Sigmoid colon (tissue), 7 donors: ENCODE measurements at regions of chr17 and their contacts with region 1.

Region 1: GRCh38 chr17:66673668-66674315 is 161.1 kb upstream of the CACNG5 start:
- DNase-seq: peak; percentile 66
- H3K4me3 ChIP-seq: no peak overlapping the region
- H3K27ac ChIP-seq: peak overlapping the region; percentile 10 to 66 (median 55)
- H3K4me1 ChIP-seq: peaks cover 0 to 33% (median 31%) of the 10 kb centered on the region in 4 donors
- H3K27me3 ChIP-seq: no peaks in the 10 kb centered on the region
- CTCF ChIP-seq: peak; percentile 62 to 84 (median 74)
- EP300 ChIP-seq: no peak
- POLR2A ChIP-seq: no peak

Region 2: DNA sequence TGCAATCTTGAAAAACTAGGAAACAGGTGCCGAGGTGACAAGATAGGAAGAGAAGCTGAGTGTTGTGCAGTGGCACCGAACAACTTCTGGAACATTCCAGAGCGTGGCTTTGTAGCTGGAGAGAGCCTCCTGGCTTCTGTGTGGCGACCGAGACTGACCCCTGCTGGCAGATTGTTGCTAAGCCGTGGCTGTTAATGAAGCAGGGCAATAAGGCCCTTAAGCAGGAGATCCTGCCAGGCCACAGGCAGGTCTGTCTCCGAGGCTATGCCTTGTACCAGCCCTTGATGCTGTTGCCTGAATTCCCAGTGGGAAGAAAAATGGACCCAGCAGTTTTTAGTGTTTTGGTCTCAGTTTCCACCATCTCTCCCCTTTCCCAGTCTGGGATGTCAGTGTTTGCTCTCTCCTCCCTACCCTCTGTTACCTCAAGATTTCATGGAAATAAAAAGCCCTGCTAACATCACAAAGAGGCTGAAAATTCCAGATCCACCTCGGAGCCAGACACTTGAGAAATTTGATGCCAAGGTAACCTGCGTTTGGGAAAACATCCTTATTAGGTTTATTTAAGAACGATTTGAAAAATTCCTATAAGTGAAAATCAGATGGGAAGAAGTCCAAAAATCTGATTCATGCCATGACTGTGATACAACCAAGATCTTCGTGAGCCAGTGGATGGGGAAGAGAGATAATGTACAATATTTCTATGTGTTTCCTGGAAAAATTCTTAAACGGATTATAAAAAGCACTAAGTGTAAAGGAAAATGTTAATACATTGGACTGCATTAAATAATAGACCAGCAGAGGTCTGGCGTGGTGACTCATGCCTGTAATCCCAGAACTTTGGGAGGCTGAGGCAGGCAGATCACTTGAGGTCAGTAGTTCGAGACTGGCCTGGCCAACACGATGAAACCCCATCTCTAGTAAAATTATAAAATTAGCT is 106.3 kb before region 1 on chr17:
- intact Hi-C with region 1: loop called (anchors 10 kb)
- DNase-seq: peak; percentile 87
- H3K4me3 ChIP-seq: no peak overlapping the region
- H3K27ac ChIP-seq: peak overlapping the region in 2 of 4 donors; percentile 1 to 30
- H3K4me1 ChIP-seq: peaks cover 0 to 33% (median 20%) of the 10 kb centered on the region in 4 donors
- H3K27me3 ChIP-seq: no peaks in the 10 kb centered on the region
- CTCF ChIP-seq: peak; percentile 70 to 83 (median 73)
- EP300 ChIP-seq: no peak
- POLR2A ChIP-seq: no peak